ENCODE measurements at regions of chr17 and their contacts with region 1.

Region 1: DNA sequence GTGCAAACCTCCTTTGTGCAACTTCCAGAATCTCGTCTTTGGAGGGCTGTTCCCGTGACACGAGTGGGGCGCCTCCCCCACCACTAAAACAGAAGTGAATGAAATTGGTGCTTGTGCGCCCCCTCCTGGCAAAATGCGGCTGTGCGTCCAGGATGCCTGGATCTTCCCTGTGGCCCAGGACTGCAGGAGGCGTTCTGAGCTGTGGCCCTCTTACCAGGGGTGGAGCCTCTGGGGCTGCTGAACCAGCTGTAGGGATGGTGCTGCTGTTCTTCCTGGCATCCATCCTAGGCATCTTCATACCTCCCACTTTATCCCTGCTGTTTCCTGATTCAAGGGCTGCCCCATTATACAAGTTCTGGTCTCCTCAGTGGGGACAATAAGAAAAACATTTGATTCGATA is 18.5 kb upstream of the NAGLU start:
- DNase-seq: peak; percentile 91
- H3K4me3 ChIP-seq: no peak overlapping the region
- H3K27ac ChIP-seq: peak overlapping the region; percentile 89 to 98 (median 92)
- H3K4me1 ChIP-seq: peaks cover 48 to 64% (median 55%) of the 10 kb centered on the region in 4 donors
- H3K27me3 ChIP-seq: no peaks in the 10 kb centered on the region
- CTCF ChIP-seq: peak; percentile 92 to 98 (median 95)
- EP300 ChIP-seq: no peak
- POLR2A ChIP-seq: no peak

Region 2: DNA sequence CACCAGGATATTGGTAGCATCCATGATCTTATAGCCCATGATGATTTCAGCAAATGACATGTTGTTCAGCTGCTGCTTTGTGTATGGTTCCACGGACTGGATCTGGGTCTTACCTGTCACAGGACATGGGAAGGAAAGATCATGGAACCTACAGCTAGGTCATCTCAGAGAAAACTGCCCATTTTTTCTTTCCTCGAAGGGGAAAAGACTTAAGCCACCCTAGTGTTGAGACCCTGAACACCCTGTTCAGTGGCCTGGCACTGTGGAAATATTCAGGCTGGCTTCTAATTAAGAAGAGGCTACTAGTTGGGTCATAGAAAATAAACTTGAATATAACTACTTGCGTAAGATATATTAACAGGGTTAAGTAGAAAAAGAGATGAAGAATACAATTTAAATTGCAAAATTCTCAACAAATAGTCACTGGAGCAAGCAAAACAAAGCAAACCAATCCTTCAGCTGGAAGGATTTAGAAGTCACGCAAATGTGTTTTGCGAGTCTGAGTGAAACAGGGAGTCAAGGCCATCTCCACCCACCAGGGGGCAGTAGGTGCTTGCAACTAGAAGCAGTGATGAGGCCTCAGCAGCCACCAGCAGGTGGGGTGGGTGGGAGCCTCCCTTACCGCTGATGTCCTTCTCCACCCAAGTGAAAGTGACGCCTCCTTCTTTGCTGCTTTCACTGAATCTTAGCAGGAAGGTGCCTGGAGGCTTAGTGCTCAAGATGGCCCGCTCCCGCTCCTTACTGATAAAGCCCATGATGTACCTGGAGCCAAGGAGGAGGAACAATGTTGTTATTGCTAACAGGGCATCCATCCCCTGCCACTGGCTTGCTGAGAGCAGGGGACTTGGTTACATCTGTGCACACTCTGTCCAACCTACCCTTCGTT is 194.9 kb before region 1 on chr17:
- in situ Hi-C with region 1: loop called in 3 of 4 experiments (anchors 10 to 25 kb)
- intact Hi-C with region 1: no loop called
- DNase-seq: peak; percentile 95
- H3K4me3 ChIP-seq: no peak overlapping the region
- H3K27ac ChIP-seq: peak overlapping the region in 3 of 4 donors; percentile 7 to 48 (median 17)
- H3K4me1 ChIP-seq: peaks cover 0 to 18% (median 2%) of the 10 kb centered on the region in 4 donors
- H3K27me3 ChIP-seq: no peaks in the 10 kb centered on the region
- CTCF ChIP-seq: peak; percentile 96 to 100 (median 99)
- EP300 ChIP-seq: no peak
- POLR2A ChIP-seq: no peak

Region 3: DNA sequence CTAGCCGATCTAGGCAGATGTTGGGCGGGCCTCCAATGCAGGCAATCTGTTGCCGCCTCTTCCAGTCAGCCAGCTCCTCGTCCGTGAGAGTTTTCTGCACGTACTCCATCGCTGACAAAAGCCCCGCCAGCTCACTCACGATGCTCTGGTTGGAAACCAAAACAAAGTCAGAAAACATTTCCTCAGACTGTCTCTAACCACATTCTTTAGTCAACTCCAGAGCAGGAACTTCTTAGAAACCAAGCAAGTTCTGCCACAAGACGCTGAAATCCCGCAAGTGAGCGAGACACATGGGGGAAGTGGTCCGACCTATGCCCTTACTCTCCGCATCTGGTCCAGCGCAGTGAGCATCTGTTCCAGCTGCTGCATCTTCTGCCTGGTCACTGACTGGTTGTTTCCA is 180.1 kb before region 1 on chr17:
- in situ Hi-C with region 1: loop called in 1 of 4 experiments (anchors 25 kb)
- intact Hi-C with region 1: no loop called
- DNase-seq: peak; percentile 38
- H3K4me3 ChIP-seq: no peak overlapping the region
- H3K27ac ChIP-seq: peak overlapping the region in 1 of 4 donors; percentile 34
- H3K4me1 ChIP-seq: peaks cover 0 to 11% (median 2%) of the 10 kb centered on the region in 4 donors
- H3K27me3 ChIP-seq: no peaks in the 10 kb centered on the region
- CTCF ChIP-seq: no peak
- EP300 ChIP-seq: no peak
- POLR2A ChIP-seq: no peak

Region 4: GRCh38 chr17:42405963-42406495 is 111.5 kb before region 1 on chr17:
- in situ Hi-C with region 1: loop called in 1 of 4 experiments (anchors 25 kb)
- intact Hi-C with region 1: no loop called
- DNase-seq: peak; percentile 87
- H3K4me3 ChIP-seq: no peak overlapping the region
- H3K27ac ChIP-seq: peak overlapping the region; percentile 72 to 90 (median 79)
- H3K4me1 ChIP-seq: peaks cover 33 to 67% (median 60%) of the 10 kb centered on the region in 4 donors
- H3K27me3 ChIP-seq: no peaks in the 10 kb centered on the region
- CTCF ChIP-seq: peak; percentile 87 to 97 (median 88)
- EP300 ChIP-seq: no peak
- POLR2A ChIP-seq: no peak

Region 5: DNA sequence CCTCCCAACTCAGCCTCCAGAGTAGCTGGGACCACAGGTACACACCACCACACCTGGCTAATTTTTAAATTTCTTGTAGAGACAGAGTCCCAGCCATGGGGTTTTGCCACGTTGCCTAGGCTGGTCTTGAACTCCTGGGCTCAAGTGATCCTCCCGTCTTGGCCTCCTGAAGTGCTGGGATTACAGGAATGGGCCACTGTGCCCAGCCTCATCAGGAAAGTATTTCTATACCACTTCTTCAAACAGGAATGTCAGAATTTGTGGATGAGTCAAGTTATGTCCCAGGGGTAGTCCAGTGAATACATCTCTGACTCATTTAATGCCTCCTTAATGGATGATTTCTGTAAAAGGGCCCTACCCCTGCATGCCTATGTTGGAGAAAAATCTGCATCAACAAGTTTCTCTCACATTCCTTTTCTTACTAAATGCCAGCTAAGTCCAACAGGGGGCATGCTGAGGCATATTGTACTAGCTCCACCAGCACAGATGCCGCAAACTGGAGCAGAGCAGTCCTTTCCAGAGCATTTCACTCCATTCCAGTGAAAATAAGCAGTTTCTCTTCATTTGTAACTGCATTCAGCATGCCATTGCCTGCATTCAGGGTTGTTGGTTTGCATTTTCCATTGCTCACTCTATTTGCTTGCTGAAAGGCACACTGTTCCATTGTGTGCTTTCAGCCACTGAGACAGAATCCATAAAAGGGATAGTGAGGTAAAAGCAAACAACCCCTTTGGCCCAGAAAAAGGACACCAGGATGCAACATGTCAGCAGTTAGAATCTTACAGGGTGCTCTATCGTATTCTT is 89.2 kb before region 1 on chr17:
- in situ Hi-C with region 1: loop called (anchors 5 to 25 kb)
- intact Hi-C with region 1: loop called (anchors 10 kb)
- DNase-seq: peak; percentile 57
- H3K4me3 ChIP-seq: no peak overlapping the region
- H3K27ac ChIP-seq: peak overlapping the region in 3 of 4 donors; percentile 8 to 32 (median 13)
- H3K4me1 ChIP-seq: peaks cover 5 to 35% (median 17%) of the 10 kb centered on the region in 4 donors
- H3K27me3 ChIP-seq: peaks cover 5% of the 10 kb centered on the region
- CTCF ChIP-seq: peak; percentile 57 to 78 (median 65)
- EP300 ChIP-seq: no peak
- POLR2A ChIP-seq: no peak

Region 6: GRCh38 chr17:42673885-42674754 is 156.6 kb after region 1 on chr17:
- in situ Hi-C with region 1: no loop called
- intact Hi-C with region 1: no loop called
- DNase-seq: peak; percentile 66
- H3K4me3 ChIP-seq: peak overlapping the region; percentile 4 to 91 (median 79)
- H3K27ac ChIP-seq: peak overlapping the region; percentile 92 to 98 (median 96)
- H3K4me1 ChIP-seq: peaks cover 16 to 55% (median 43%) of the 10 kb centered on the region in 4 donors
- H3K27me3 ChIP-seq: no peaks in the 10 kb centered on the region
- CTCF ChIP-seq: peak; percentile 21 to 51 (median 32)
- EP300 ChIP-seq: no peak
- POLR2A ChIP-seq: no peak

Measured in transverse colon (tissue), 4 donors.